ENCODE measurements at regions of chr20 and their contacts with region 1.

Region 1: DNA sequence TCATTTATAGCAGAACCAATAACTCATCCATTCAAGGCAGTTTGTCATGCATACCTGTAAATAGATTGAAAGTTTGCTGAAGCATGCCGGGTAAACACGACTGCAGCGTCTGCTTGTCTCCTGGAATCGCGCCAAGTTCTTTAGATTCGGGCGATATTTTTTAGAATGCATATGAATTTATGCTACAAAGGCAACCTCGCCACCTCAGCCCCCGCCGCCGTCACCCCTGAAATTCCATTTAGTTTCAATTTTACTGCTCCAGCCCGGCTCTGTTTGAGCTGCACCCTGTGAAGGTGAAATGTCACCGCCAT is 17.3 kb upstream of the CDH4 start:
- DNase-seq: no peak
- H3K4me3 Mint-ChIP-seq: no peak overlapping the region
- H3K27ac Mint-ChIP-seq: no peak overlapping the region
- H3K4me1 Mint-ChIP-seq: peaks cover 5% of the 10 kb centered on the region
- H3K27me3 Mint-ChIP-seq: peaks cover 57% of the 10 kb centered on the region
- CTCF ChIP-seq: no peak

Region 2: DNA sequence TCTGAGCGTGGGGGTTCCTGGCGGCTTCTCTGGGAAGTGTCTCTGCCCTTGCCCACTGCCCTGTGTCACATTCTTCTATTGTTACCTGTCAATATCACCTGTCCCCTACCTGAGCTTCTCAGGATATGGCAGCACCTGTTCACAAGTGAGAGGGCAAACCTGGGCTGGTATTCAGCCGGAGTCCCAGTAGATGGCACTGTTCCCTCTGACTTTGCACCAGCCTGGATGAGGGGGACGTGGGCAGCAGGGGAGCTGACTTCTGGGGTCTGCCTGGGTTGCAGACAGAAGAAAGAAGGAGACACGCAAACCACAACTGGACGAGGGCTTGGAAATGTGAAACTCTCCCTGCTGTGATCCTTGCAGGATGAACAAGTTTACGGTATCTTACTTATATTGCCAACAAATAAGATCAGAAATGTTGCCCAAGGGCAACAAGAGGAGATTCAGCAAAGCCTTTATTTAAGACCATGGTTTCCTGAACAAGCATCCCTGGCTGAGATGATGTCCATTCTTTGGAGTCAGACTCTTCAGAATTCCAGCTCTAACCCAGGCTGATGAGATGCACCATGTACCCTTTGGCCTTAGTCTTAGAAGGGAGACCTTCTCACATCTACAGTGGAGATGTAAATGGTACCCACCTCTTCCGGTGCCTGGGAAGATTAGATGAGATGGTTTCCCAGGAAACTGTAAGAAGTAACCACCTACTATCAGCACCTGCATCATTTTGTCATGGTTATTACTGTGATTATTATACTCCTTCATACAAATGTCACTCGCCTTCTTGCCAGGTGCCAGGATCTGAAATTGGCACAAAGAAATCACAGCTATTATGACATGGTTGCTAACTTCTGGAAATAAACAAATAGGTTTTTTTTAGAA is 382.7 kb before region 1 on chr20:
- CTCF ChIA-PET with region 1: no interaction called
- POLR2A ChIA-PET with region 1: no interaction called
- intact Hi-C with region 1: loop called (anchors 1 kb)
- DNase-seq: peak; percentile 31
- H3K4me3 Mint-ChIP-seq: no peak overlapping the region
- H3K27ac Mint-ChIP-seq: no peak overlapping the region
- H3K4me1 Mint-ChIP-seq: no peaks in the 10 kb centered on the region
- H3K27me3 Mint-ChIP-seq: peaks cover 69% of the 10 kb centered on the region
- CTCF ChIP-seq: peak; percentile 79

Region 3: GRCh38 chr20:60950561-60950960 is 284.2 kb before region 1 on chr20:
- CTCF ChIA-PET with region 1: no interaction called
- POLR2A ChIA-PET with region 1: no interaction called
- intact Hi-C with region 1: no loop called
- DNase-seq: no peak
- H3K4me3 Mint-ChIP-seq: no peak overlapping the region
- H3K27ac Mint-ChIP-seq: no peak overlapping the region
- H3K4me1 Mint-ChIP-seq: no peaks in the 10 kb centered on the region
- H3K27me3 Mint-ChIP-seq: peaks cover 92% of the 10 kb centered on the region
- CTCF ChIP-seq: no peak

Region 4: DNA sequence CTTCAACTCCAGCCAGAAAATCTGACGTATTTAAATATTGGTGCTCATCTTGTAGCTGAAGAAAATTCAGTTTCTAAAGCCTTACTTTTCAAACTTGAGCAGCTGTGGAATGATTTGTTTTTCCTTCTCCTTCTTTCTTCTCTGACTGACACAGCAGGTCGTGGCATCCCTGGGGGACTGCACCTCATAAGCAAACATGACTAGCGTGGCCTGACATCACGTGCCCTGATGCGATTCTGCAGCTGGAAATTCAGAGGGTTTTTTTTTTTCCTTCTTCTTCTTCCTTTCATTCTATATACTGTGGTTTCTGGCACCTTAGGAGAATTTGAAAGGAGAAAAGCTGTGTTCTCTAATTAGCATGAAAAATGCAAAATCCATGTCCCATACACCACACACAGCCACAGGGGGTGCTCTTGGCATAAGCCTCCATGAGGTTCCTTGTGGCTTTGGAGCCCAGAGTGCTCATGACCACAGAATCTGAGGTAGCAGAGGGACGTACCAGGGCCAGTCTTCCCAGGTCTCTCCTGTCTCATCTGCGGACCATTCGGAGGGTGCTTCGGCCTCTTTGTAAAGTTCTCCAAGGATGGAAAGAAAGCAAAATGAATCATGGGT is 241.2 kb before region 1 on chr20:
- CTCF ChIA-PET with region 1: no interaction called
- POLR2A ChIA-PET with region 1: no interaction called
- intact Hi-C with region 1: loop called (anchors 1 kb)
- DNase-seq: peak; percentile 18
- H3K4me3 Mint-ChIP-seq: no peak overlapping the region
- H3K27ac Mint-ChIP-seq: no peak overlapping the region
- H3K4me1 Mint-ChIP-seq: no peaks in the 10 kb centered on the region
- H3K27me3 Mint-ChIP-seq: peaks cover 99% of the 10 kb centered on the region
- CTCF ChIP-seq: peak; percentile 28

Region 5: DNA sequence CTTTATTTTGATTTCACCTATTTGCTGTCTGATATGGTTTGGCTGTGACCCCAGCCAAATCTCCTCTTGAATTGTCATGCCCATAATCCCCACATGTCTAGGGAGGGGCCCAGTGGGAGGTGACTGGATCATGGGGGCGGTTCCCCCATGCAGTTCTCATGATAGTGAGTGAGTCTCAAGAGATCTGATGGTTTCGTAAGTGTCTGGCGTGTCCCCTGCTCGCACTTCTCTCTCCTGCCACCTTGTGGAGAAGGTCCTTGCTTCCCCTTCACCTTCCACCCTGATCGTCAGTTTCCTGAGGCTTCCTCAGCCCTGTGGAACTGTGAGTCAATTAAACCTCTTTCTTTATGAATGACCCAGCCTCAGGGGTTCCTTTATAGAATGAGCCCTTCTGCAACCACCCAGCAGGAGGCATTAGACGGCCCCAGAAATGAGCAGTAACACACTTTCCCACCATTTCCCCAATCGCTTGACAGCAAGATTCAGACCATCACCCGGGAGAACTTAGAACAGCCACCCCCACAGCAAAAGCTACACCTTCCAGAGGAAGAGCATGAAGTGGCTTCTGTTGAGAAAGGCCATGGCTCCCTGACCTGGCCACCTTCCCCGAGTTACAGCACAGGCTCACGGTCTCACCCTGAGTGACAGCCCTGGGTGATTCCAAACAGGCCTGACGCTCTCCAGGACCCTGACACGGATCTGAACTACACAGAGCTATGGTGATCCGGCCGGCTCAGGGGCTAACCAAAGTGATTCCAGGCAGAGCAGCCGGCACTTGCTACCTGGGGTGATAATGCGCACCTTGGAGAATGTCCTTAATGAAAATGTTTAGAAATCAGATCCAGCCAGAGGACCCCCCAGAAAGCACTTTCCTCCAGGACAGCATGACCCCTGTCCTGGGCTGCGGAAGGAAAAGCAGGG is 113.9 kb before region 1 on chr20:
- CTCF ChIA-PET with region 1: interaction called, 3 read pairs
- POLR2A ChIA-PET with region 1: no interaction called
- intact Hi-C with region 1: loop called (anchors 1 kb)
- DNase-seq: peak; percentile 83
- H3K4me3 Mint-ChIP-seq: no peak overlapping the region
- H3K27ac Mint-ChIP-seq: no peak overlapping the region
- H3K4me1 Mint-ChIP-seq: peaks cover 6% of the 10 kb centered on the region
- H3K27me3 Mint-ChIP-seq: peaks cover 41% of the 10 kb centered on the region
- CTCF ChIP-seq: peak; percentile 61

Region 6: GRCh38 chr20:61219021-61219431 is 15.7 kb before region 1 on chr20:
- CTCF ChIA-PET with region 1: interaction called, 34 read pairs
- POLR2A ChIA-PET with region 1: no interaction called
- intact Hi-C with region 1: no loop called
- DNase-seq: no peak
- H3K4me3 Mint-ChIP-seq: no peak overlapping the region
- H3K27ac Mint-ChIP-seq: no peak overlapping the region
- H3K4me1 Mint-ChIP-seq: peaks cover 16% of the 10 kb centered on the region
- H3K27me3 Mint-ChIP-seq: peaks cover 53% of the 10 kb centered on the region
- CTCF ChIP-seq: no peak

Region 7: DNA sequence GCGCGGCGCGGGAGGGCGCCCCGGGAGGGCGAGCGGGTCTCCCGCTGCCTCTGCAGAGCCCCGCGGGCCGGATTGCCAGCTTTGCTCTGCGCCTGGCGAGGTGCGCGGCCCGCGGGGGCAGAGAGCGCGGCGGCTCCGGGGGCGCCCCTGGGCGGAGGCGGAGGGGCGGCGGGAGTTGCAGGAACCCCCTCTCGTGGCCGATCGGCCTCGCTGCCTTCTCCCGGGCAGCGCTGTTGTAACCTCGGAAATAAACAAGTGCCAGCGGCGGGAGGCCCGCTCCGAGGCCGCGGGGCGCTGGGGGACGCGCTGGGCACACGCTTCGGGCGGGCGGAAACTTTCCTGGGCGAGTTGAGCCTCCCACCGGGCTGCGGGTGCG is 18.5 kb after region 1 on chr20:
- CTCF ChIA-PET with region 1: interaction called, 25 read pairs
- POLR2A ChIA-PET with region 1: no interaction called
- intact Hi-C with region 1: no loop called
- DNase-seq: peak; percentile 41
- H3K4me3 Mint-ChIP-seq: peak overlapping the region; percentile 68
- H3K27ac Mint-ChIP-seq: no peak overlapping the region
- H3K4me1 Mint-ChIP-seq: peaks cover 16% of the 10 kb centered on the region
- H3K27me3 Mint-ChIP-seq: peaks cover 7% of the 10 kb centered on the region
- CTCF ChIP-seq: peak; percentile 26

Region 8: DNA sequence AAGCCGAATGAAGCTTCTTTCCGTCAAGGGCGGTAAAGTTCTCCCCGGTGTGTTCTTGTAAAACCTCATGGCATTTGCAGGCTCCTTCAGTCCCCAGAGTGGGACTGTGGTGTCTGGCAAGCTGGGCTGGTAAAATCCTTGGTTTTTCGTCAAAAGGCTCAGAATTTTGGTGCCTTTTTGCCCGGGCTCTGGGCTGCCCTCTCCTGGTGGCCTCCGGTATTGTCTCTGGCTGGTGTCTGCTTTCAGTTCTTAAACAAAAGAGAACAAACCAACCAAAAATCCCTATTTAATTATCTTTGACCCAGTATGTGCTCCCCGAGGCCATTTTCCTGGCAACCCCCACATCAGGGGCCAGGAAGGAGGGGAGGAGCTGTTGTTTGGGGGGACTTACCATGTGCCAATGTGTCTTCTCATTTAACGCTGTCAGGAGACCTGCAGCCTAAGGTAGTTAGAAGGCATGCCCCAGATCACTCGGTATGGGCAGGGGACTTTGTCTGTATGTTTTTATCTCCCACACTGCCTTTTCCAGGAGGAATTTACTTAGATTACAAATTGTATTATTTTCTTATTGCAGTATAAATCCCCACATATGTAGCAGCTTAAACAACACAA is 28.4 kb after region 1 on chr20:
- CTCF ChIA-PET with region 1: interaction called, 14 read pairs
- POLR2A ChIA-PET with region 1: no interaction called
- intact Hi-C with region 1: no loop called
- DNase-seq: peak; percentile 18
- H3K4me3 Mint-ChIP-seq: no peak overlapping the region
- H3K27ac Mint-ChIP-seq: no peak overlapping the region
- H3K4me1 Mint-ChIP-seq: no peaks in the 10 kb centered on the region
- H3K27me3 Mint-ChIP-seq: no peaks in the 10 kb centered on the region
- CTCF ChIP-seq: peak; percentile 78

Measured in MCF 10A (cell line).